WTC11 (cell line): ENCODE measurements at regions of chr1 and their contacts with region 1.

Region 1: GRCh38 chr1:212749821-212750535 is 41.6 kb downstream of the NSL1 start:
- DNase-seq: no peak
- ATAC-seq: peak; percentile 61
- H3K4me3 Mint-ChIP-seq: no peak overlapping the region
- H3K27ac Mint-ChIP-seq: peak overlapping the region; percentile 94
- H3K4me1 Mint-ChIP-seq: peaks cover 42% of the 10 kb centered on the region
- H3K27me3 Mint-ChIP-seq: no peaks in the 10 kb centered on the region
- CTCF ChIP-seq: peak; percentile 76

Region 2: GRCh38 chr1:212368073-212368484 is 381.9 kb before region 1 on chr1:
- CTCF ChIA-PET with region 1: no interaction called
- POLR2A ChIA-PET with region 1: no interaction called
- DNase-seq: peak; percentile 59
- ATAC-seq: peak; percentile 96
- H3K4me3 Mint-ChIP-seq: no peak overlapping the region
- H3K27ac Mint-ChIP-seq: no peak overlapping the region
- H3K4me1 Mint-ChIP-seq: no peaks in the 10 kb centered on the region
- H3K27me3 Mint-ChIP-seq: no peaks in the 10 kb centered on the region
- CTCF ChIP-seq: peak; percentile 76

Region 3: GRCh38 chr1:212721388-212722247 is 28.4 kb before region 1 on chr1:
- CTCF ChIA-PET with region 1: interaction called, 15 read pairs
- POLR2A ChIA-PET with region 1: no interaction called
- DNase-seq: no peak
- ATAC-seq: no peak
- H3K4me3 Mint-ChIP-seq: no peak overlapping the region
- H3K27ac Mint-ChIP-seq: no peak overlapping the region
- H3K4me1 Mint-ChIP-seq: no peaks in the 10 kb centered on the region
- H3K27me3 Mint-ChIP-seq: no peaks in the 10 kb centered on the region; the same call in 1 of the 2 replicates
- CTCF ChIP-seq: no peak

Region 4: GRCh38 chr1:212760126-212760823 is 10.3 kb after region 1 on chr1:
- CTCF ChIA-PET with region 1: interaction called, 33 read pairs
- POLR2A ChIA-PET with region 1: no interaction called
- DNase-seq: peak; percentile 84
- ATAC-seq: peak; percentile 99
- H3K4me3 Mint-ChIP-seq: no peak overlapping the region
- H3K27ac Mint-ChIP-seq: no peak overlapping the region
- H3K4me1 Mint-ChIP-seq: 0 out of 2 replicates have a peak, but pooled peaks cover 10% of the 10 kb centered on the region
- H3K27me3 Mint-ChIP-seq: no peaks in the 10 kb centered on the region
- CTCF ChIP-seq: peak; percentile 51; the same call in 1 of the 2 replicates

Region 5: DNA sequence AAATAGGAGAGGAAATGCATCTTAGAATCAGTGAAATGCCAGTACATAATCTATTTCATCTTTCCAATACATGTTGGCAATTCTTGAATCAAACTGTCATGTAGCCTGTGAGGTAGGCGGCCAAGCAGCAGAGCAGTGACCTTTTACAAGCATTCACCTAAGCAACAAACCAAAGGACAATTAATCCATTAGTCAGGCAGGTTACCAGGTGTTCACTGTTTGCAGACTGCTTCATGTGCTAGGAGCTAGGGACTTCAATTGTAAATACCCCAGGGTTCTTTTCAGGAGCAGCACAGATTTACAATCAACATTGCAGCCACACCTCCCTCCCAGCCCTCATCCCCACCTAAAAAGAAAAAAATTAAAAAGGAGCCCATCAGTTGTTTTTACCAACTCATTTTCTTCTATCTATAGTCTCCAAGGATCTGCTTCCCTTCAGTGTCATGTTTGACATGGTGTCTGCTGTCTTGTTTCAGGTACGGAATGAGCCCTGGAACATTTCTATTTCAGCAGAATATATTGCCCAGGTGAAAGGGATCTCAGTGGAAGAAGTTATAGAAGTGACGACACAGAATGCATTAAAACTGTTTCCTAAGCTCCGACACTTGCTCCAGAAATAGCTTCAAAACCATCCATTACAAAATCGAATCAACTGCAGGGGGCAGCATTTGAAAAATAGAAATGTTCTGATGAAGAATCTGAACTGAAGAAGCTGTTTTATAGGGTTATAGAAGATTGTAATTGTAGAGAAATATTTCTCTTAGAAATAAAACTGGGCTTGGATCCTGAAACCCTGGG is 64.8 kb after region 1 on chr1:
- CTCF ChIA-PET with region 1: interaction called, 10 read pairs
- POLR2A ChIA-PET with region 1: no interaction called
- DNase-seq: no peak
- ATAC-seq: peak; percentile 82
- H3K4me3 Mint-ChIP-seq: no peak overlapping the region
- H3K27ac Mint-ChIP-seq: peak overlapping the region; percentile 69
- H3K4me1 Mint-ChIP-seq: peaks cover 14% of the 10 kb centered on the region
- H3K27me3 Mint-ChIP-seq: no peaks in the 10 kb centered on the region
- CTCF ChIP-seq: no peak

Region 6: GRCh38 chr1:212994926-212995325 is 244.9 kb after region 1 on chr1:
- CTCF ChIA-PET with region 1: interaction called, 18 read pairs
- POLR2A ChIA-PET with region 1: no interaction called
- DNase-seq: no peak
- ATAC-seq: no peak
- H3K4me3 Mint-ChIP-seq: no peak overlapping the region
- H3K27ac Mint-ChIP-seq: peak overlapping the region; percentile 60; the same call in 1 of the 2 replicates
- H3K4me1 Mint-ChIP-seq: peaks cover 14% of the 10 kb centered on the region
- H3K27me3 Mint-ChIP-seq: no peaks in the 10 kb centered on the region
- CTCF ChIP-seq: no peak